ENCODE measurements at regions of chr1 and their contacts with region 1.

Region 1: GRCh38 chr1:153698020-153698931 is 19.8 kb downstream of the NPR1 start:
- DNase-seq: peak; percentile 89

Region 2: DNA sequence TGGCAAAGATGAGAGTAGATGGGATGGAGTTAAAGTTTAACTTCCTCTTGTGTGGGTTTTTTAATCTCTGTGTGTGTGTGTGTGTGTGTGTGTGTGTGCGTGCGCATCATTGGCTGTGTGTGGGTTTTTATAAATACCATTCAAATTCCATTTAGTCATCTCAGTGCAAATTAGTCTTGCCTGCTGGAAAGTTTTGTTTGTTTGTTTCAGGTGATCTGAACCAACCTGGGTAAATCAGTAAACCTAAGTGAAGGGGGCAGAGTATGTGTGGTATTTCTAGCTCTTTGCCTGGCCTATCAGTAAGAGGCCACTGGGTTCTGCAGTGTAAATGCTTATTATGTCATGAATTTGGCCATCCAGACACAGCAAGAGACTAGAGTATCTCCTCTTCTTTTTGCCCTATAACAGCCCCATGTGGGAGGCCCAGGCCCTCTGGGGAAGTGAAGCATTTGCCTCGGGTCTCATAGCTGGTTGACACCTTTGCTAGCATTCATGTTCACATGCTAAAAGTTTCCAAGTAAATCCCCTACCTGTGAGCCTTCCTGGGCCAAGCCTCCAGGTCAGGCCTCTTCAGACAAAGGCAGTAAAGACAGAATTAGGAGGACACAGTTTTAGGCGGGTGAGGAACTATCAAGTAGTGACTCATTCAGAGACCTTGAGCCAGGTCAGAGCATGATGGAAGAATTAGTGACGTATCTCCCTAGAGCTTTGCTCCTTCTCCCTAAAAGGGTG is 44.3 kb after region 1 on chr1:
- intact Hi-C with region 1: no loop called
- DNase-seq: no peak

Region 3: GRCh38 chr1:153763365-153764225 is 65.3 kb after region 1 on chr1:
- intact Hi-C with region 1: loop called (anchors 5 kb)
- DNase-seq: no peak

Region 4: GRCh38 chr1:153860285-153860684 is 162.0 kb after region 1 on chr1:
- intact Hi-C with region 1: no loop called
- DNase-seq: no peak